Aorta (tissue), 5 donors: ENCODE measurements at regions of chr3 and their contacts with region 1.

Region 1: DNA sequence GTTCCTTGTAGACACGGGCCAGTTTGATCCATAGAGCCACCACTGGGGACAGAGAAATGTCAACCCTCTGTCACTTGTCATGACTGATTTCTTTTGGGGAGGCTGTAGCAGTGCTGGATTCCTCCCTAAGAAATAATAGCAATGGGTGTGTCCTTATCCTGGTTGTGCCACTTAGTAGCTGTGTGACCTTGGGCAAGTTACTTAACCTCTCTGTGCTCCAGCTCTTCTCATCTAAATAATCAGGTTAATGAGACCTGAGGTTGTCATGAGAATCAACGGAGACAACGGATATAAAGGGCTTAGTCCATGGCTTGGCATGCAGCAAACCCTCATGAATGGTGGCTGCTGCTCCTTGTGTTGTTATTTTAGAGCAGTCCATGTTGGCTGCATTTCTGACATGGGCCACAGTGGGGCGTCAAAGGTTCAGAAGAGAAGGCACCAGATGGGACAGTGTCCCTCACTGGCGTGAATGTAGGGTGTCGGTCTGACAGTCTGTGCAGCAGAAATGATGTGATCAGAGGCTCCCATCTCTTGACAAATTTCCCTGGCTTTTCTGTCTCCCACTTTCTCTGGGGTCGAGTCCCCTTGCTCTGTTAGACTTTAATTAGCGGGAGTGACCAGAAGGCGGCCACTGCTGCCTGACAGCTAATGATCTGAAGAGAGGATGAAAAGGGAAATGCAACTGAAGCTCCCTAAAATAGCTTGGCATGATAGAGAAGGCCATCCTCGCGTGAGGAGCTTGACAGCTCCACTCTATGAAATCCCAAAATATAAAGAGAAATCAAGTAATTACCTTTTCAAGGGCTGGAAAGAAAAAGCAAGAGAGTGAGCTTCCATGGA is 209.4 kb downstream of the CADPS start:
- DNase-seq: peak in 1 of 2 donors; percentile 65
- ATAC-seq: peak; percentile 67
- H3K4me3 ChIP-seq: no peak overlapping the region
- H3K27ac ChIP-seq: no peak overlapping the region
- H3K4me1 ChIP-seq: no peaks in the 10 kb centered on the region
- H3K27me3 ChIP-seq: no peaks in the 10 kb centered on the region

Region 2: DNA sequence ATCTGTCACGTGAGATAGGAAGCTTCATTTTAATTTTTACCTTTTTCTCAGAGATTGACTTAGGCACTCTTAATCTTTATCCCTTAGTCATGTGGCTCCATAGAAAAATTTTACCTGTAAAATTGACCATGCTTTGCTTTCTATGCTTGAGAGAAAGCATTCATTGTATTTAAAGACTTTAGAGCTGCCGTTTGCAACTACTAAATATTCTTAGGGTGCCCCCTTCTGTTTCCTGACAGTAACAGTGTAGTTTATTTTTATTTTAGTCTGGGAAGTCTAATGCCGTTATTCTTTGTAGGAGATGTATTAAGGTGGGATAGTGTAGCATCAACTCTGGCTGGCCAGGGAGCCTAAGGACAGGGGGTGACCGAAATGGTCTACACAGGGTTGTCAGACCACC is 527.8 kb after region 1 on chr3:
- intact Hi-C with region 1: loop called in 1 of 2 experiments (anchors 10 kb)
- DNase-seq: no peak
- ATAC-seq: no peak
- H3K4me3 ChIP-seq: no peak overlapping the region
- H3K27ac ChIP-seq: no peak overlapping the region
- H3K4me1 ChIP-seq: no peaks in the 10 kb centered on the region
- H3K27me3 ChIP-seq: peaks cover 0 to 1% of the 10 kb centered on the region in 2 donors